ENCODE measurements at regions of chr4 and their contacts with region 1.

Region 1: DNA sequence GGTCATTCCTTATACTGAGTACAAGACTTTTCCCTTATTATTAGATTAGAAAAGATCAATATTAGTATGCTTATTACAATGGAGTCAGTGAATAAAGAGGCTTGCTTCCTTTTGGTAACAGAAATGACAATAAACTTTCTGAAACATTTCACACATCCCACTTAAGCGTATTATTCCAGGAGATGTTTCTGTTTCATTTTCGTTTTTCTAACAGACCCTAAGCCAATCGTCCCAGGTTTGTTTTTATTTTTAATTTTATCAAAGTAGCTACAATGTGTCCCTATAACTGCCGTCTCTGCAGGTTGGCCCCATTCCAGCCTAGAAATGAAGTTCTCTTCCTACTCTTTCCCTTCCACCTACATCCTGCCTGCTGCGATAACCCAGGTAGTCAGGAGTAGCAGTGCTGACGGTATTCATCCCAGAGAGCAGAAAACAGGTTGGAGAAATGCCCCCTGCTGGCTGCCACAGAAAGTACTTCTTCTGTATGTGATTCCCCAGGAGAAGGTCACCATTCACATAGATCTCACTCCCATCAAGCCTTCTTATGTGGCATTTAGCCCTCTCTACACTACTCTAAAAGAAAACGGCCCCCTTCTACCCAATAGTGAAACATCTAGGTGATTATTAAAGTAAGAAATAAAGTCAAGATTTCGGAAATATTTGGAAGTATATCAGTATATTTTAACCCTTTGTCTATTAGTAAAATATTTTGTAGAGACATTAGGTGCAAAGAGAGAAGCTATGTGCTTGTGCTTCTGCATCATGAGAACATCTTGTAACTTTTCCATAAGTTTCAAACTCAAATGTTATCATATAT is 40.4 kb downstream of the ENPEP start:
- DNase-seq: peak; percentile 72
- H3K4me3 Mint-ChIP-seq: peak overlapping the region; percentile 81
- H3K27ac Mint-ChIP-seq: peak overlapping the region; percentile 31
- H3K4me1 Mint-ChIP-seq: peaks cover 14% of the 10 kb centered on the region
- H3K27me3 Mint-ChIP-seq: peaks cover 21% of the 10 kb centered on the region

Region 2: GRCh38 chr4:110005461-110006056 is 510.8 kb before region 1 on chr4:
- CTCF ChIA-PET with region 1: interaction called, 11 read pairs
- POLR2A ChIA-PET with region 1: no interaction called
- DNase-seq: peak; percentile 44
- H3K4me3 Mint-ChIP-seq: no peak overlapping the region
- H3K27ac Mint-ChIP-seq: no peak overlapping the region
- H3K4me1 Mint-ChIP-seq: peaks cover 20% of the 10 kb centered on the region
- H3K27me3 Mint-ChIP-seq: peaks cover 6% of the 10 kb centered on the region